ENCODE measurements at regions of chr10 and their contacts with region 1.

Region 1: GRCh38 chr10:96395931-96396877 is 37.4 kb upstream of the OPALIN start:
- DNase-seq: no peak
- H3K4me3 ChIP-seq: no peak overlapping the region
- H3K27me3 ChIP-seq: peaks cover 2% of the 10 kb centered on the region; the same call in 1 of the 2 replicates
- CTCF ChIP-seq: peak; percentile 89

Region 2: GRCh38 chr10:96374985-96375830 is 21.0 kb before region 1 on chr10:
- CTCF ChIA-PET with region 1: interaction called, 20 read pairs
- POLR2A ChIA-PET with region 1: no interaction called
- DNase-seq: no peak
- H3K4me3 ChIP-seq: peak overlapping the region; percentile 41
- H3K27me3 ChIP-seq: no peaks in the 10 kb centered on the region; the same call in 1 of the 2 replicates
- CTCF ChIP-seq: peak; percentile 100

Region 3: GRCh38 chr10:96384501-96384900 is 11.7 kb before region 1 on chr10:
- CTCF ChIA-PET with region 1: interaction called, 13 read pairs
- POLR2A ChIA-PET with region 1: no interaction called
- DNase-seq: no peak
- H3K4me3 ChIP-seq: no peak overlapping the region
- H3K27me3 ChIP-seq: no peaks in the 10 kb centered on the region
- CTCF ChIP-seq: no peak

Region 4: GRCh38 chr10:96413151-96413787 is 17.1 kb after region 1 on chr10:
- CTCF ChIA-PET with region 1: interaction called, 14 read pairs
- POLR2A ChIA-PET with region 1: no interaction called
- DNase-seq: no peak
- H3K4me3 ChIP-seq: no peak overlapping the region
- H3K27me3 ChIP-seq: peaks cover 3% of the 10 kb centered on the region; the same call in 1 of the 2 replicates
- CTCF ChIP-seq: no peak

Region 5: GRCh38 chr10:96513698-96514561 is 117.7 kb after region 1 on chr10 and contains the start of gene TLL2:
- CTCF ChIA-PET with region 1: interaction called, 28 read pairs
- POLR2A ChIA-PET with region 1: no interaction called
- DNase-seq: peak; percentile 47
- H3K4me3 ChIP-seq: peak within 1 kb of the TSS; percentile 46
- H3K27me3 ChIP-seq: peaks cover 4% of the 10 kb centered on the region; the same call in 1 of the 2 replicates
- CTCF ChIP-seq: peak; percentile 67
- polyA plus RNA-seq, gene TLL2: 0.05 and 0.06 TPM in 2 replicates

Region 6: GRCh38 chr10:96639899-96640298 is 243.7 kb after region 1 on chr10:
- CTCF ChIA-PET with region 1: interaction called, 10 read pairs
- POLR2A ChIA-PET with region 1: no interaction called
- DNase-seq: no peak
- H3K4me3 ChIP-seq: no peak overlapping the region
- H3K27me3 ChIP-seq: peaks cover 2% of the 10 kb centered on the region; the same call in 1 of the 2 replicates
- CTCF ChIP-seq: no peak